A549 (cell line): ENCODE measurements at regions of chr5 and their contacts with region 1.

Region 1: GRCh38 chr5:178163772-178164735 is 10.4 kb upstream of the NHP2 start:
- DNase-seq: peak; percentile 77 to 89
- ATAC-seq: peak; percentile 95 to 99
- H3K4me3 ChIP-seq: peak overlapping the region; percentile 15; the same call in 1 of the 3 replicates
- H3K27ac ChIP-seq: 0 out of 6 replicates have a peak overlapping the region, but pooled peaks of 1 of the 2 experiments have one; percentile 18
- H3K4me1 ChIP-seq: no peaks in the 10 kb centered on the region
- CTCF ChIP-seq: peak; percentile 88
- EP300 ChIP-seq: no peak
- POLR2A ChIP-seq: no peak
- RAD21 ChIP-seq: peak; percentile 91 to 92

Region 2: GRCh38 chr5:178153573-178154343 is 10.3 kb before region 1 on chr5 and contains the start of gene NHP2:
- CTCF ChIA-PET with region 1: interaction called, 12 read pairs
- POLR2A ChIA-PET with region 1: no interaction called
- DNase-seq: peak; percentile 95 to 98
- ATAC-seq: peak; percentile 97
- H3K4me3 ChIP-seq: peak within 1 kb of the TSS; percentile 94
- H3K27ac ChIP-seq: peak within 1 kb of the TSS; percentile 85 to 88
- H3K4me1 ChIP-seq: peaks cover 13% of the 10 kb centered on the region
- CTCF ChIP-seq: no peak
- EP300 ChIP-seq: no peak
- POLR2A ChIP-seq: peak; percentile 46
- RAD21 ChIP-seq: no peak
- polyA plus RNA-seq, gene NHP2: 177 and 205 TPM in 2 replicates